ENCODE measurements at regions of chr2 and their contacts with region 1.

Region 1: GRCh38 chr2:30711646-30712085 is 95.6 kb downstream of the CAPN13 start:
- DNase-seq: peak; percentile 85
- ATAC-seq: peak; percentile 85
- H3K4me3 ChIP-seq: no peak overlapping the region
- H3K27ac ChIP-seq: no peak overlapping the region
- H3K4me1 ChIP-seq: no peaks in the 10 kb centered on the region
- H3K27me3 ChIP-seq: no peaks in the 10 kb centered on the region
- CTCF ChIP-seq: peak; percentile 99 to 100 (median 99)
- POLR2A ChIP-seq: no peak
- RAD21 ChIP-seq: peak; percentile 92

Region 2: DNA sequence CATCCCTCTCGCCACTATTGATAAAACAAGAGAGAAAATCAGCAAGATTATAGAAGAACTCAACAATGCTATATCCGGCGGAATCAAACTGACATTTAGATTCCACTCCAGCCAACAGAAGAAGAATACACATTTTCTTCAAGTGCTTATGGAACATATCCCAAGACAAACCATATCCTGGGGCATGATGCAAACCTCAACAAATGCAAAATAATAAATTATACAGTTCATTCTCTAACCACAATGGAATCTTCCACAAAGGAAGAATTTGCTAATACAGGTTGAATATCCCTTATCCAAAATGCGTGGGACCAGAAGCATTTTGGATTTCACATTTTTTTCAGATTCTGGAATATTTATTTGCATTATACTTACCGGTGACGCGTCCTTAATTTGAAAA is 616.3 kb before region 1 on chr2:
- CTCF ChIA-PET with region 1: interaction called, 4 read pairs
- POLR2A ChIA-PET with region 1: no interaction called
- RAD21 ChIA-PET with region 1: no interaction called
- intact Hi-C with region 1: loop called (anchors 2 kb)
- DNase-seq: no peak
- ATAC-seq: no peak
- H3K4me3 ChIP-seq: no peak overlapping the region
- H3K27ac ChIP-seq: no peak overlapping the region
- H3K4me1 ChIP-seq: no peaks in the 10 kb centered on the region
- H3K27me3 ChIP-seq: peaks cover 42% of the 10 kb centered on the region
- CTCF ChIP-seq: no peak
- POLR2A ChIP-seq: no peak
- RAD21 ChIP-seq: no peak

Region 3: DNA sequence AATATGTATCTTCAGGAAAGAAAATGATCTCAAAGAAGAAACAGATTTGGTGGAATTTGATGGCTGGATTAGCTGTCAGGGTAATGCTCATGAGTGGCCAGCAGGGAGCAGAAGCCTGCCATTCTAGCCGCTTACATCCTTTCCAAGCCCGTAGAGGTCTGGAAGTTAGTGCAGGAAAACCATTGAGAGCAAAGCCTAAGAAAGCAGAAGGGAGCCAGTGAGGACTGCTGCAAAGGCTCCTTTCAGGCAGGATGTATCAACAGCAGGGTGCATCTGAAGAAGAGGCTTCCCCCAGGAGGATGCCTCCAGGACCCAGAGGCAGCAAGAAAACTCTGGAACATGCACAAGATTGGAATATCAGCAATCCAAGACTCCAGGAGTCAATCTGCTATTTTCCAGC is 503.2 kb before region 1 on chr2:
- CTCF ChIA-PET with region 1: interaction called, 33 read pairs
- POLR2A ChIA-PET with region 1: no interaction called
- RAD21 ChIA-PET with region 1: interaction called, 5 to 9 read pairs
- intact Hi-C with region 1: loop called (anchors 1 kb)
- DNase-seq: peak; percentile 47
- ATAC-seq: peak; percentile 93
- H3K4me3 ChIP-seq: no peak overlapping the region
- H3K27ac ChIP-seq: no peak overlapping the region
- H3K4me1 ChIP-seq: peaks cover 0 to 4% of the 10 kb centered on the region in 2 experiments; a peak in 1 of 4 replicates
- H3K27me3 ChIP-seq: peaks cover 3% of the 10 kb centered on the region; the same call in 1 of the 2 replicates
- CTCF ChIP-seq: peak; percentile 79 to 96 (median 82)
- POLR2A ChIP-seq: no peak
- RAD21 ChIP-seq: peak; percentile 98

Region 4: DNA sequence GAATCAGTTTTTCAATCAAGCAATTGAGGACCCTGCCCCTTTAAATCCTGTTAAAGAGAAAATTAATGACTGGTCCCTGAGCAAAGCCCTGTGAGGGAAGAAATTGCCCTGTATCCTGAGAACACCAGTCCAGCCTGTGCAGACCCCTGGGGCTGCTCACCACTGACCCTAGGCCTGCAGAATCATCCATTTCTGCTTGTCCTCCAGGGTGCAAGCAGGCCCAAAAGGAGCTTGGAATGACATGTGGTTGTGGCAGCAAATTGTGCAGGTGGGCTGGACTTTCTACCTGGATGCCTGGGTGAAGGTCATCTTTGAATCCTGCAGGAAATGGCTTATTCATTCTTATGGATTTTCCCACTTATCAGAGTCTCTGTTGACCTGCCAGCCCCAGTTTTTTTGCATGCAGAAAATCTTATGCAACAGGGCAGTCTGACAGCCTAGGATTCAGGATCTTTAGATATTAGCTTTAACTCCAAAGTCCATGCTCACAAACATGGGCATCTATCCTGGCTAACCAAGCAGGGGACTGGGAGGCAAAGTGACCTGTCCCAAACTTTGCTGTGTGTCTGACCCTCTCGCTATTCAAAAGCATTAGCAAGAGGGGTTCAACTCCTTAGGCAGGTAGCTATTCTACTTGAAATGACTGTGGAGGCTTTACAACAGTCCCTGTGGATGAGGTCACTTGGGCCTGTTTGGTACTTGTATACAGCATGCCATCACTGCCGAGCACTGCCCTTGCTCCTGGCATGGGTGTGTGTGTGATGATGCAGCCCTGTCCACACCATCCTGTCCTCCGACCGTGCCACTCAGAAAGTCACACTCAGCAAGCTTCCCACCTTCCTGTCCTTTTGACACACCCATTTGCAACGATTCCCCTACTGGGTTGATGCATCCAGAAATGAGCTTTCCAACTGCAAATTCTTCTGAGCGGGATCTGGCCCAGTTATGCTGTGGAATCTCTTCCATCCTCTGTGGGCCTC is 10.3 kb after region 1 on chr2:
- CTCF ChIA-PET with region 1: no interaction called
- POLR2A ChIA-PET with region 1: no interaction called
- RAD21 ChIA-PET with region 1: no interaction called
- intact Hi-C with region 1: no loop called
- DNase-seq: no peak
- ATAC-seq: no peak
- H3K4me3 ChIP-seq: no peak overlapping the region
- H3K27ac ChIP-seq: no peak overlapping the region
- H3K4me1 ChIP-seq: no peaks in the 10 kb centered on the region
- H3K27me3 ChIP-seq: peaks cover 34% of the 10 kb centered on the region
- CTCF ChIP-seq: no peak
- POLR2A ChIP-seq: no peak
- RAD21 ChIP-seq: no peak

Region 5: DNA sequence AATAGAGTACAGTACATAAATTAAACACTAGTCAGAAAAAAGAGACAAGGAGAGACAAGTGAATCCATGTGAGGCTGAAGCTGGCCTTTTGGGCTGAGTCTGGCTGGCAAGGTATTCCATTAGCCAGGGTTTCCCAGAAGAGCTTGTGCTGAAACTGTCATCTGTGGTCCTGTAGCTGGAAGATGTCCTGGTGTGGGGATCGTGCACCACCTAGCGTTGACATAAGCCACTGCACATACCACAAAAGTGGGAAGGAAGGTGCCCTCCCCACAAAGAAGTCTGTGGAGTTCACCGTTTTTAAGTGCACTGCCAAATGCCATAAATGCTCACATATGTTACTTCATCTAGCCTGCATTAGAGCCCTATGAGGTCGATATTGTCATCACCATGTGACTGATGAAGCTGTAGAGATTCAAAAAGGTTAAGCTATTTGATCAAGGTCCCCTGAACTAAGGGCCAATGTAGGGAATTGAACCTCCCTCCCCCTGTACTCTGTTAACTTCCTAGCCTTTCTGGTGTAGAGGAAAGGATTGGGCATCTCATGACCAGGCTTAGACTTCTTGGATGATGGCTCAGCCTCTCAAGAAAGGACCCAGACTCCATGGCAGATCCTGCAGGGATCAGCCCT is 458.5 kb after region 1 on chr2:
- CTCF ChIA-PET with region 1: interaction called, 66 read pairs
- POLR2A ChIA-PET with region 1: no interaction called
- RAD21 ChIA-PET with region 1: interaction called, 4 read pairs
- intact Hi-C with region 1: loop called (anchors 1 kb)
- DNase-seq: peak; percentile 40
- ATAC-seq: peak; percentile 97
- H3K4me3 ChIP-seq: no peak overlapping the region
- H3K27ac ChIP-seq: no peak overlapping the region
- H3K4me1 ChIP-seq: no peaks in the 10 kb centered on the region
- H3K27me3 ChIP-seq: peaks cover 21% of the 10 kb centered on the region; the same call in 1 of the 2 replicates
- CTCF ChIP-seq: peak; percentile 86 to 92 (median 90)
- POLR2A ChIP-seq: no peak
- RAD21 ChIP-seq: peak; percentile 89

Region 6: DNA sequence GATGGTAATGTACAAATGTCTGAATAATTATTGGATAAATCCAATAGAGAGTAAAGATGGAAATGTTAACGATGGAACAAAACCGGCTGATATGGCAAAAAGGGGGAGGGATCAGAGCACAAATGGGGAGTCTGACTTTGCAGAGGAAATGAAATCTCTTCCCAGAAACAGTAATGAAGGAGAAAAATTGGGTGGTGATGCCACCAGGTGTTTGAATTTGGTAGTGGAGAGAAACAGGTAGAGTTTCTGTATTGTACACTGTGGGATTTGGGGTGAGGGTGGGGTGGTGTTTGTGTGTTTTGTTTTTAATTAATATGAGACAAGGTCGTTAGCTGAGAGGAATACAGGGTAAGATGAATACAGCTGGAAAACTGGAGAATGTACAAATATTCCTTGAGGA is 723.2 kb after region 1 on chr2:
- CTCF ChIA-PET with region 1: no interaction called
- POLR2A ChIA-PET with region 1: no interaction called
- RAD21 ChIA-PET with region 1: no interaction called
- intact Hi-C with region 1: loop called (anchors 10 kb)
- DNase-seq: no peak
- ATAC-seq: peak; percentile 58
- H3K4me3 ChIP-seq: no peak overlapping the region
- H3K27ac ChIP-seq: no peak overlapping the region
- H3K4me1 ChIP-seq: peaks cover 7% of the 10 kb centered on the region in 2 experiments
- H3K27me3 ChIP-seq: no peaks in the 10 kb centered on the region; the same call in 1 of the 2 replicates
- CTCF ChIP-seq: peak; percentile 20 to 52 (median 37); a peak in 4 of 6 replicates
- POLR2A ChIP-seq: no peak
- RAD21 ChIP-seq: peak; percentile 63

Region 7: GRCh38 chr2:31831585-31831984 is 1119.9 kb after region 1 on chr2:
- CTCF ChIA-PET with region 1: no interaction called
- POLR2A ChIA-PET with region 1: no interaction called
- RAD21 ChIA-PET with region 1: no interaction called
- intact Hi-C with region 1: loop called (anchors 10 kb)
- DNase-seq: no peak
- ATAC-seq: no peak
- H3K4me3 ChIP-seq: no peak overlapping the region
- H3K27ac ChIP-seq: no peak overlapping the region
- H3K4me1 ChIP-seq: no peaks in the 10 kb centered on the region
- H3K27me3 ChIP-seq: no peaks in the 10 kb centered on the region
- CTCF ChIP-seq: no peak
- POLR2A ChIP-seq: no peak
- RAD21 ChIP-seq: no peak

Measured in HCT116 (cell line).